MCF 10A (cell line): ENCODE measurements at regions of chr6 and their contacts with region 1.

Region 1: GRCh38 chr6:53064726-53065215 is 433 bp upstream of the FBXO9 start:
- DNase-seq: peak; percentile 98
- H3K4me3 Mint-ChIP-seq: peak overlapping the region; percentile 95
- H3K27ac Mint-ChIP-seq: peak overlapping the region; percentile 88
- H3K4me1 Mint-ChIP-seq: peaks cover 23% of the 10 kb centered on the region
- H3K27me3 Mint-ChIP-seq: no peaks in the 10 kb centered on the region
- CTCF ChIP-seq: no peak

Region 2: DNA sequence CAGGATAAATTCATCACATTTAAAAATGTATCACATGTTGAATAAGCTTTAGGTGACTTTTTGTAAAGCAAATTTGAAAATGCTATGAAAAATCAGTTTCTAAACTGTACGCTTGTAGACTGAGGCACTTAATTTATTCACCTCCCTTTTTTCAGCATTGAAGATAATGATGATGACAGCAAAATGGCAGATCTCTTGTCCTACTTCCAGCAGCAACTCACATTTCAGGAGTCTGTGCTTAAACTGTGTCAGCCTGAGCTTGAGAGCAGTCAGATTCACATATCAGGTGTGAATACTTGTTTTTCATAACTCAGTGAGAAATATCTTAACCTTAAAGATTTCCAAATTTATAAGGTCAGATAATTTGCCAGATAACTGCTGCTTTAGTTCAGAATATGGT is 16.0 kb after region 1 on chr6:
- CTCF ChIA-PET with region 1: interaction called, 3 read pairs
- POLR2A ChIA-PET with region 1: interaction called, 14 read pairs
- intact Hi-C with region 1: no loop called
- DNase-seq: no peak
- H3K4me3 Mint-ChIP-seq: no peak overlapping the region
- H3K27ac Mint-ChIP-seq: no peak overlapping the region
- H3K4me1 Mint-ChIP-seq: no peaks in the 10 kb centered on the region
- H3K27me3 Mint-ChIP-seq: no peaks in the 10 kb centered on the region
- CTCF ChIP-seq: no peak